ENCODE measurements at regions of chr1 and their contacts with region 1.

Region 1: DNA sequence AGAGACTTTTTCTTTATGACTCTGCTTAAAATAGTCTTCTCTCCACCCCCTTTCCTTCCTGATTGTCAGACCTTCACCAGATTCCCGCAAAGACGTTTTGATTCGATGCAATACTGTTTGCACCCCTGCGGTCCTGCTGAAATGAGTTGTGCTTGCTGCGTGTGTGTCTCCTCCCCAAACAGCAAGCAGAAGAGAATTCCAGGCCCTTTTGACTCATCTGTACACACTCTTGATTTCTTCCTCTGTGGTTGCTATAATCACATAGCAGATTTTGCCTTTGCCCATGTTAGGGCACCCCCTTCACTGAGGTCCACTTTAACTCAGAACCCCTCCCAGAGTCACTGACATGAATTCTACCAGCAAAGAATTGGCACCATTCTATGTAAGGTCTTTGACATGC is 136.5 kb downstream of the ZZZ3 start:
- DNase-seq: no peak
- ATAC-seq: no peak
- H3K4me3 Mint-ChIP-seq: no peak overlapping the region
- H3K27ac Mint-ChIP-seq: no peak overlapping the region
- H3K4me1 Mint-ChIP-seq: no peaks in the 10 kb centered on the region
- H3K27me3 Mint-ChIP-seq: no peaks in the 10 kb centered on the region

Region 2: GRCh38 chr1:77533660-77534305 is 12.2 kb before region 1 on chr1:
- CTCF ChIA-PET with region 1: interaction called, 10 read pairs
- POLR2A ChIA-PET with region 1: no interaction called
- DNase-seq: peak; percentile 67
- ATAC-seq: no peak
- H3K4me3 Mint-ChIP-seq: no peak overlapping the region
- H3K27ac Mint-ChIP-seq: no peak overlapping the region
- H3K4me1 Mint-ChIP-seq: peaks cover 2% of the 10 kb centered on the region
- H3K27me3 Mint-ChIP-seq: no peaks in the 10 kb centered on the region

Region 3: DNA sequence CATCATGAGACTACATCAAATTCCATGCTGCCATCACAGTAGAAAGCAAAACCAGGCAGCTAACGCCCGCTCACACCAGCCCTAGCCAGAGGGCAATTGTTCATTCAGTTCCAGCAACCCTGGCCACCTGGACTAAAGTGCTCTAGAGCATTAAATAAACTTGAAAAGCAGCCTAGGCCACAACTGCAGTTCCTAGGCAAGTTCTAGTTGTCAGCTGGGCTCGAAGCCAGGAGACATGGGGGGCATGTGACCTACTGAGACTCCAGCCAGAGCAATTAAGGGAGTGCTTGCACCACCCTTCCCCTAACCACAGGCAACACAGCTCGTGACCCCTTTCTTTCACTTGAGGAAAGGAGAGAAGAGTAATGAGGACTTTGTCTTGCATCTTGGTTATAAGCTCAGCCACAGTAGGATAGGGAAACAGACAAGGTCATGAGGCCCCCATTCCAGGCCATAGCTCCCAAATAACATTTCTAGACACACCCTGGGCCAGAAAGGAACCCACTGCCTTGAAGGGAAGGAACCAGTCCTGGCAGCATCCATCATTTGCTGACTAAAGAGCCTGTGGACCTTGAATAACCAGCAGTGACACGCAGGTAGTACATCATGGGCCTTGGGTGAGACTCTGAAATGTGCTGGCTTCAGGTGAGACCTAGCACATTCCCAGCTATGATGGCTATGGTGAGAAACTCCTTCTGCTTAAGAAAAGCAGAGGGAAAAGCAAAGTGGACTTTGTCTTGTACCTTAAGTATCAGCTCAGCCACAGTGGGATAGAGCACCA is 59.5 kb after region 1 on chr1:
- CTCF ChIA-PET with region 1: no interaction called
- POLR2A ChIA-PET with region 1: no interaction called
- DNase-seq: no peak
- ATAC-seq: no peak
- H3K4me3 Mint-ChIP-seq: no peak overlapping the region
- H3K27ac Mint-ChIP-seq: no peak overlapping the region
- H3K4me1 Mint-ChIP-seq: no peaks in the 10 kb centered on the region
- H3K27me3 Mint-ChIP-seq: no peaks in the 10 kb centered on the region

Region 4: DNA sequence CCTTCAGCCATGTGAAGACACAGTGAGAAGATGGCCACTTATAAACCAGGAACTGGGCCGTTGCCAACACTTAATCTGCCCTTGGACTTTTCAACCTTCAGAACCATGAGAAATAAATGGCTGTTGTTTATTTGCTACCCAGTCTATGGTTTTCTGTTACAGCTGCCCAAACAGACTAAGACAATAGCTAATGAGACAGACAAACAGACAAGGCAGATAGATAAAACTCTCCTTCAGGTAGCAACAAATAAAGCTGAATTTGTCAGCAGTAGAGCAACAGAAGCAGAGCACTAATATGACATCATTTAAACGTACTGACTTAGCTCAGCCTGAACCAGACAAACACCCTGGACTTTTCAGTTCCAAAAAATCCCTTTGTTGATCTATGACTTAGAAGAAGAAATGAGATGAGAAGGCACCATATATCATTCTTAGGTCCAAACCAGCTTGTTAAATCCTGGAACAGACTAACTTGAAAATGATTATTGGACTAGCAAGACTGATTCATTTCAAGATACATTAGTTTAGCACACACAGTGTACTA is 109.5 kb after region 1 on chr1:
- CTCF ChIA-PET with region 1: no interaction called
- POLR2A ChIA-PET with region 1: no interaction called
- DNase-seq: no peak
- ATAC-seq: no peak
- H3K4me3 Mint-ChIP-seq: no peak overlapping the region
- H3K27ac Mint-ChIP-seq: no peak overlapping the region
- H3K4me1 Mint-ChIP-seq: no peaks in the 10 kb centered on the region
- H3K27me3 Mint-ChIP-seq: no peaks in the 10 kb centered on the region